ENCODE measurements at regions of chr6 and their contacts with region 1.

Region 1: GRCh38 chr6:157314705-157315321 is 8.5 kb downstream of the TMEM242 start:
- DNase-seq: peak; percentile 64
- H3K4me3 ChIP-seq: no peak overlapping the region
- H3K27ac ChIP-seq: no peak overlapping the region
- H3K27me3 ChIP-seq: no peaks in the 10 kb centered on the region
- CTCF ChIP-seq: peak; percentile 95

Region 2: GRCh38 chr6:157597446-157598312 is 282.9 kb after region 1 on chr6:
- CTCF ChIA-PET with region 1: interaction called, 10 read pairs
- POLR2A ChIA-PET with region 1: no interaction called
- DNase-seq: no peak
- H3K4me3 ChIP-seq: no peak overlapping the region; the same call in 1 of the 2 replicates
- H3K27ac ChIP-seq: no peak overlapping the region
- H3K27me3 ChIP-seq: no peaks in the 10 kb centered on the region
- CTCF ChIP-seq: peak; percentile 46

Region 3: DNA sequence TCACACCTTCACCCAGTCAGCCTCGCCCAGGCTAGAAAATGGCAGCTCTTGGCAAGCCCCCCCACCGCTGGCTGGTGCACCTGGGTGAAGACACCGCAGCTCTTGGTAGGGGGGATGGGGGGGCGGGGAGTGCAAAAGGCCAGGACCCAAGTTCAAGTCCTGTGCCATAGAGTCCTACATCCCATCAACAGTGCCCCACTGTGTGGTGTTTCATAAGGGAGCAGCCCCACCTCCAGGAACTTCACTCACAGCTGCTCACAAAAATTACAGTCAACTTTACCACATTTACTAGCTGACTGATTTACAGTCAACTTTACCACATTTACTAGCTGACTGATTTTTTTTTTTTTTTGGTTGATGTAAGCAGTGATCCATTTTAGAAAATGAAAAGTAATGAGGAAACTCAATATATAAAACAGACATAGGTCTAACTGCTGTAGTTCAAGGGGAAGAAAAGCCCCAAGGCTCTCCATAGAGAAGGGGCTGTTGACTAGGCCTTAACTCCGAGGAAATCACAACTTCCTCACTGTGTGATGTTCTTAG is 299.3 kb after region 1 on chr6:
- CTCF ChIA-PET with region 1: interaction called, 22 read pairs
- POLR2A ChIA-PET with region 1: no interaction called
- DNase-seq: no peak
- H3K4me3 ChIP-seq: no peak overlapping the region
- H3K27ac ChIP-seq: peak overlapping the region; percentile 91
- H3K27me3 ChIP-seq: no peaks in the 10 kb centered on the region
- CTCF ChIP-seq: no peak

Region 4: DNA sequence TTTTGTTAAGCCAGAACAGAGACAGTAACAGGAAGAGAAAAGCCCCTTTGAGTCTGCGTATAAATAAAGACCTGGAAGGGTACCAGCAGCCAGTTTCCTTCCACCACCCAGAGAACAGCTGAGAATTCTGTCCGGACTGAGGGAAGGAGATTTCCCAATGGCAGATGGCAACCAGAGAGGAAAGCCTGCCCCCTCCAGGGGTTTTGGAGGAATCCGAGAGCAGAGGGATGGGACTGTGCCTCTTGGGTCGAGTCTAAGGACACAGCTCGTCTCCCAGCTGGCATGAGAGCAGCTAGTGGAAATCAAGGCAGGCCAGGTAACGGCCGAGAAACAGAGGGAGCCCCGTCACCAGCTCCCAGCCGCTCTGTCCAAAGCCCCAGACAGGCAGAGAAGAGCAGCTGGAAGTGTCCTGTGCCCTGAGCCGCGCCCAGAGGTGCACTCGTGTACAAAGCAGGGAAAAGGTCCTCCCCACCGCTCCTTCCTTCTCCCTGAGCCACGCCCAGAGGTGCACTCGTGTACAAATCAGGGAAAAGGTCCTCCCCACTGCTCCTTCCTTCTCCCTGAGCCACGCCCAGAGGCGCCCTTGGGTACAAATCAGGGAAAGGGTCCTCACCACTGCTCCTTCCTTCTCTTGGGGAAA is 374.3 kb after region 1 on chr6:
- CTCF ChIA-PET with region 1: interaction called, 12 read pairs
- POLR2A ChIA-PET with region 1: no interaction called
- DNase-seq: no peak
- H3K4me3 ChIP-seq: no peak overlapping the region
- H3K27ac ChIP-seq: no peak overlapping the region
- H3K27me3 ChIP-seq: peaks cover 36% of the 10 kb centered on the region
- CTCF ChIP-seq: peak; percentile 43

Measured in AG04450 (cell line).